Naive thymus-derived CD4-positive, alpha-beta T cell (primary cell): ENCODE measurements at regions of chr6 and their contacts with region 1.

Region 1: DNA sequence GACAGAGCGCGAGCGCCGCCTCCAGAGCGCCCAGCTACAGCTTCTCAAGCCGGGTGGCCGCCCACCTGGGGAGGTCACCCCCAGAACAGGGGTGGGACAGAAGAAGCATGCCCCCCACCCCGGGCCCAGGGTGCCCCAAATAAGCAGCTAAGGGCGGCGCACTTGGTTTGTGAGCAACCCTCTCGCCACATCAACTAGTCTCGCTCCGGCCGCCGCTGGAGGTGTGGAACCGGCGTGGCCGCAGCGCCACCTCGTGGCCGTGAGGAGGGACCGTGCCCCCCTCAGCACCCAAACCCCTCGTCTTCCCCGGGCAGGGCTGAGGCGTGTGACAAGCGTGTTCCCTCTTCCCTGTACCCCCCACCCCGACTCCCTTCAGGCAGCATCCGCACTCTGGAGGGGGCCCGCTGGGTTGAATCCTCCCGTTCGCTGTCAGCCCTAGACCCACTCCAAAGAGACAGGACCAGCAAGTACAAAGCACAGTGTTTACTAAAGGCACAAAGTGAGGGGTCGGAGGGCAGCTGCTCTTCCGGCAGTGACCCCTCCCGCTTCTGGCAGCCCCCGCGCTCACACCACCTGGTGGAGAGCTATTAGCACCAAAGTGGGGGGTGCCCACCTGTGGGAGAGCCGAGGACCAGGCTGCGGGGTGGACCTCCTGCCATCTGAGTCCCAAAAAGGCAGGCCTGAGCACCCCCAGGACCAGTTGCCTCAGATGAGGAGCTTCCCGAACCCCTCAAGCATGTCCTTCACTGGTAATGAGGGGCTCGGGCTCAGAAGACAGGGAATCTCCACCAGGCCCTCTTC is 45.4 kb downstream of the MDFI start:
- DNase-seq: peak; percentile 57 to 83 (median 76)
- ATAC-seq: peak; percentile 91
- H3K4me3 ChIP-seq: peak overlapping the region; percentile 61
- H3K4me3 Mint-ChIP-seq: peak overlapping the region; percentile 51 to 84 (median 78)
- H3K27ac ChIP-seq: peak overlapping the region; percentile 53
- H3K27ac Mint-ChIP-seq: peak overlapping the region in 8 of 9 donors; percentile 43 to 86 (median 76)
- H3K4me1 ChIP-seq: peaks cover 3 to 4% of the 10 kb centered on the region in 2 donors
- H3K4me1 Mint-ChIP-seq: peaks cover 0 to 15% (median 11%) of the 10 kb centered on the region in 7 donors
- H3K27me3 ChIP-seq: no peaks in the 10 kb centered on the region
- H3K27me3 Mint-ChIP-seq: peaks cover 0 to 4% (median 0%) of the 10 kb centered on the region in 5 donors

Region 2: GRCh38 chr6:41306187-41306854 is 377.4 kb before region 1 on chr6:
- CTCF ChIA-PET with region 1: interaction called, 3 read pairs
- POLR2A ChIA-PET with region 1: no interaction called
- intact Hi-C with region 1: loop called (anchors 1 to 2 kb)
- DNase-seq: peak in 7 of 9 donors; percentile 20 to 53 (median 35)
- ATAC-seq: no peak
- H3K4me3 ChIP-seq: no peak overlapping the region
- H3K4me3 Mint-ChIP-seq: no peak overlapping the region
- H3K27ac ChIP-seq: no peak overlapping the region
- H3K27ac Mint-ChIP-seq: no peak overlapping the region
- H3K4me1 ChIP-seq: no peaks in the 10 kb centered on the region
- H3K4me1 Mint-ChIP-seq: peaks cover 7 to 28% (median 20%) of the 10 kb centered on the region in 7 donors
- H3K27me3 ChIP-seq: no peaks in the 10 kb centered on the region
- H3K27me3 Mint-ChIP-seq: peaks cover 0 to 45% (median 0%) of the 10 kb centered on the region in 5 donors

Region 3: GRCh38 chr6:41424370-41425058 is 259.2 kb before region 1 on chr6:
- CTCF ChIA-PET with region 1: interaction called, 5 read pairs
- POLR2A ChIA-PET with region 1: no interaction called
- intact Hi-C with region 1: loop called (anchors 1 to 2 kb)
- DNase-seq: peak; percentile 47 to 81 (median 67)
- ATAC-seq: peak; percentile 77
- H3K4me3 ChIP-seq: no peak overlapping the region
- H3K4me3 Mint-ChIP-seq: no peak overlapping the region
- H3K27ac ChIP-seq: no peak overlapping the region
- H3K27ac Mint-ChIP-seq: no peak overlapping the region
- H3K4me1 ChIP-seq: peaks cover 0 to 25% of the 10 kb centered on the region in 2 donors
- H3K4me1 Mint-ChIP-seq: peaks cover 6 to 10% (median 9%) of the 10 kb centered on the region in 7 donors
- H3K27me3 ChIP-seq: peaks cover 6 to 21% of the 10 kb centered on the region in 2 donors
- H3K27me3 Mint-ChIP-seq: peaks cover 15 to 33% (median 22%) of the 10 kb centered on the region in 5 donors

Region 4: DNA sequence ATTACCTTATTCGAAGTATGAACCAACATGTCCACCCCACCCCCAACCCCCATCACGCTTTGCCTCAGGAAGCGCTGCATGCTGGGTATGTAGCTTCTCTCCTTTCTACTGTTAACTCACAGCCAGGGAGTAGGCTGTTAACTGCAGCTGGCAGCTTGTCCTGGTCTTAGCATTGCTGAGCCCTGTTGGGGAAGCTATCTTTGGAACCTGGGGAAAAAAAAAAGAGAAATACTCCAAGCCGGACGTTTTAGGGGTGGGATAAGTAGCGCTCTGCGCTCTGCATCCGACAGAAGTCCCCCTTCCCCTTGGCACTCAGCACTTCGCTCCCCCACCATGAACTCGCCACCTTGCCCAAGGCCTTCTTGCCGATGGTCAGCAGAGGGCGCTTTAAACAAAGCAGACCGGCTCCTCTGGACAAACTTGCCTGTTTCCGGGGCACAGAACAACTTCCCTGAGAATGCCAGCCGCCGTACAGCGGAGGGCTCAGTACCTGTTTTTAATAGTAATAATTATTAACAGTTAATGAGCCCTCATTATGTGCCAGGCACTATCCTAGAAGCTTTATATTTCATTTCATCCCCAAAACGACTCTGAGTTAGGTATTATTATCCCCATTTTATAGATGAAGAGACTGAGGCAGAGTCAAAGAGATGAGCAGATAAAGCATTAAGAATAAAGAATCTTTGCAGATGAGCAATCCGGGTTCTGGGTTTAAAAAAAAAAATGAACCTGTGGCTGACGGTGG is 80.7 kb before region 1 on chr6:
- CTCF ChIA-PET with region 1: interaction called, 9 read pairs
- POLR2A ChIA-PET with region 1: interaction called, 4 read pairs
- intact Hi-C with region 1: loop called (anchors 1 kb)
- DNase-seq: peak; percentile 49 to 78 (median 68)
- ATAC-seq: peak; percentile 86
- H3K4me3 ChIP-seq: no peak overlapping the region
- H3K4me3 Mint-ChIP-seq: peak overlapping the region in 6 of 10 donors; percentile 24 to 56 (median 34)
- H3K27ac ChIP-seq: no peak overlapping the region
- H3K27ac Mint-ChIP-seq: no peak overlapping the region
- H3K4me1 ChIP-seq: peaks cover 4 to 7% of the 10 kb centered on the region in 2 donors
- H3K4me1 Mint-ChIP-seq: peaks cover 4 to 7% (median 5%) of the 10 kb centered on the region in 7 donors
- H3K27me3 ChIP-seq: no peaks in the 10 kb centered on the region
- H3K27me3 Mint-ChIP-seq: peaks cover 0 to 7% (median 0%) of the 10 kb centered on the region in 5 donors

Region 5: GRCh38 chr6:41705996-41706835 is 22.5 kb after region 1 on chr6:
- CTCF ChIA-PET with region 1: no interaction called
- POLR2A ChIA-PET with region 1: no interaction called
- intact Hi-C with region 1: loop called in 1 of 2 experiments (anchors 2 kb)
- DNase-seq: peak in 2 of 9 donors; percentile 49 to 63
- ATAC-seq: peak; percentile 88
- H3K4me3 ChIP-seq: no peak overlapping the region
- H3K4me3 Mint-ChIP-seq: peak overlapping the region in 3 of 10 donors; percentile 67 to 77 (median 70)
- H3K27ac ChIP-seq: no peak overlapping the region
- H3K27ac Mint-ChIP-seq: peak overlapping the region in 2 of 9 donors; percentile 7 to 74
- H3K4me1 ChIP-seq: peaks cover 26 to 31% of the 10 kb centered on the region in 2 donors
- H3K4me1 Mint-ChIP-seq: peaks cover 30 to 59% (median 36%) of the 10 kb centered on the region in 7 donors
- H3K27me3 ChIP-seq: no peaks in the 10 kb centered on the region
- H3K27me3 Mint-ChIP-seq: no peaks in the 10 kb centered on the region